Activated CD8-positive, alpha-beta T cell treated with anti-CD3 and anti-CD28 coated beads, Interleukin-2, amount 10 ng/mL, durations not matched to agents 7 days and 5 days (primary cell): ENCODE measurements at regions of chr20 and their contacts with region 1.

Region 1: GRCh38 chr20:31630187-31630790 is 7.4 kb upstream of the COX4I2 start:
- DNase-seq: no peak
- ATAC-seq: no peak
- H3K4me3 Mint-ChIP-seq: no peak overlapping the region
- H3K27ac Mint-ChIP-seq: no peak overlapping the region
- H3K4me1 Mint-ChIP-seq: peaks cover 8% of the 10 kb centered on the region
- H3K27me3 Mint-ChIP-seq: peaks cover 4% of the 10 kb centered on the region

Region 2: DNA sequence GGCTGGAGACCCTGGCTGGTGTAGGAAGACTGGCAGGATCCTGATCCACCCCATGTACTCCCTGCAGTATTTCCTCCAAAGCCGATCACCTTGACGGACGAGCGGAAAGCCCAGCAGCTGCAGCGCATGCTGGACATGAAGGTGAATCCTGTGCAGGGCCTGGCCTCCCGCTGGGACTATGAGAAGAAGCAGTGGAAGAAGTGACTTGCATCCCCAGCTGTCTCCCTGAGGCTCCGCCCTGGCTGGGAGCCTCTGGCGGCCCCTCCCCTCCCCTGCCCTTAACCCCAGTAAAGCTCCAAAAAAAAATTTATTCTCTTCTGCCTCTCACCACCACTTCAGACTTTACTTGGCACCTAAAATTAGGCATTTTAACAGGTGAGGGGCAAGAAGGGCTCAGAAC is 14.4 kb after region 1 on chr20:
- CTCF ChIA-PET with region 1: interaction called, 12 read pairs
- POLR2A ChIA-PET with region 1: no interaction called
- DNase-seq: no peak
- ATAC-seq: no peak
- H3K4me3 Mint-ChIP-seq: no peak overlapping the region
- H3K27ac Mint-ChIP-seq: no peak overlapping the region
- H3K4me1 Mint-ChIP-seq: peaks cover 43% of the 10 kb centered on the region
- H3K27me3 Mint-ChIP-seq: peaks cover 48% of the 10 kb centered on the region

Region 3: GRCh38 chr20:31690124-31690666 is 59.9 kb after region 1 on chr20:
- CTCF ChIA-PET with region 1: no interaction called
- POLR2A ChIA-PET with region 1: no interaction called
- DNase-seq: no peak
- ATAC-seq: no peak
- H3K4me3 Mint-ChIP-seq: no peak overlapping the region
- H3K27ac Mint-ChIP-seq: peak overlapping the region; percentile 74
- H3K4me1 Mint-ChIP-seq: peaks cover 68% of the 10 kb centered on the region
- H3K27me3 Mint-ChIP-seq: no peaks in the 10 kb centered on the region

Region 4: DNA sequence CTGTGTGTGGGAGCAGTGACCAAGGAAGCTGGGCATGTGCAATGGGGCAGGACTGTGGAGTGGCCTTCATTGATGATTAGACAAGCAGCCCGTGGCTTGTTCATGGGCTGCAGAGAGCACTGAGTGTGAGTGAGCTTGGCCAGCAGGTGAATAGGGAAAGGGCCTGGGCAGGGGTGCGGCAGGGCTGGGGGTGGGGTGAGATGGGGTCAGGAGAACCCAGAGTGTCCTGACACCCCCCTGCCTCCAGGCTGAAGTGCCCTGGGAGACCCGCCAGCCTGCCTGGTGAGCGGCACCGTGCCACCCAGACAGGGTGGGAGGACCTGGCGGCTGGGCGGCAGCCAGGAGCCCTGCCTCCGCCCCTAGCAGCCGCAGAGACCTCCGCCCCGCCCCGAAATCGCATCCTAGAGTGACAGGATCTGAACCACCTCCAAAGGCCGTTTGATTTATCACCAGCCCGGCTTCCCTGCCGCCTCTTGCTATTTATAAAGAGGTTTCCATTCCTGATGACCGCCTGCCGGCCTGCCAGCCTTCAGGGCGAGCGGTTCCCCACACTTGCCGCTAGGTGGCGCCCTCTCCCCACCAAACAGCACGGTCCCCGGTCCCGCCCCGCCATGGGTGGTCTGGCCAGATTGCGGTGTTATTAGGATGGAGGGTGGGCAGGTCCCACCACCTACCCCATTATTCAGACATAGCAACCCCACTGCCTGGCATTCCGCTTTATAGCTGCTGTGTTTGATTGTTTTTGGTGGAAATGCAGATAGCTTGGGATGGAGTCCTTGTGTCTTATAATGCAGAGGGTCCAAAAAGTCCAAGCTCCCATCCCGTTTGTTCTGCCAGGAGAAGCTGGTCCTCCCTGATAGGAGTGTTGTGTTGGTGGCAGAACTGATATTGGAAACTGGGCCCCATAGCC is 192.4 kb after region 1 on chr20:
- CTCF ChIA-PET with region 1: no interaction called
- POLR2A ChIA-PET with region 1: no interaction called
- DNase-seq: peak; percentile 82
- ATAC-seq: peak; percentile 86
- H3K4me3 Mint-ChIP-seq: no peak overlapping the region
- H3K27ac Mint-ChIP-seq: no peak overlapping the region
- H3K4me1 Mint-ChIP-seq: peaks cover 16% of the 10 kb centered on the region
- H3K27me3 Mint-ChIP-seq: no peaks in the 10 kb centered on the region

Region 5: DNA sequence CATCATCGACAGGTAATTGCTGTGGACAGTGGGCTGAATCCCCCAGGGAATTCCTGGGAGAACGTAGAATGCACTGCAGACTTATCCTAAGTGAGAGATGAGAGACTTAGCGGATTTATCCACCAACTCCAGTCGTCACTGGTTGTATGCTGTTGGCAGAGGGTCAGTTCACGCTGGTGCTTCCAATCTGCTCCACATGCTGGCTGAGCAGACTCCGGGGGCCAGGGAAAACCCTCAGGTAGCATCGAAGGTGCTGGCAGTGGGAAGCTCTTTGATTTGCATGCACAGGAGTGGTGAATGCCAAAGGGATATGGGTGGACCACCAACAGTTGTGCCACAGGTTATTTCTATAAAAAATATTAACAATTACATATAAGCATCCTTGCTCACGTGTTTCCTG is 260.4 kb after region 1 on chr20:
- CTCF ChIA-PET with region 1: no interaction called
- POLR2A ChIA-PET with region 1: no interaction called
- DNase-seq: no peak
- ATAC-seq: no peak
- H3K4me3 Mint-ChIP-seq: no peak overlapping the region
- H3K27ac Mint-ChIP-seq: no peak overlapping the region
- H3K4me1 Mint-ChIP-seq: no peaks in the 10 kb centered on the region
- H3K27me3 Mint-ChIP-seq: peaks cover 10% of the 10 kb centered on the region